AG04450 (cell line): ENCODE measurements at regions of chr1 and their contacts with region 1.

Region 1: DNA sequence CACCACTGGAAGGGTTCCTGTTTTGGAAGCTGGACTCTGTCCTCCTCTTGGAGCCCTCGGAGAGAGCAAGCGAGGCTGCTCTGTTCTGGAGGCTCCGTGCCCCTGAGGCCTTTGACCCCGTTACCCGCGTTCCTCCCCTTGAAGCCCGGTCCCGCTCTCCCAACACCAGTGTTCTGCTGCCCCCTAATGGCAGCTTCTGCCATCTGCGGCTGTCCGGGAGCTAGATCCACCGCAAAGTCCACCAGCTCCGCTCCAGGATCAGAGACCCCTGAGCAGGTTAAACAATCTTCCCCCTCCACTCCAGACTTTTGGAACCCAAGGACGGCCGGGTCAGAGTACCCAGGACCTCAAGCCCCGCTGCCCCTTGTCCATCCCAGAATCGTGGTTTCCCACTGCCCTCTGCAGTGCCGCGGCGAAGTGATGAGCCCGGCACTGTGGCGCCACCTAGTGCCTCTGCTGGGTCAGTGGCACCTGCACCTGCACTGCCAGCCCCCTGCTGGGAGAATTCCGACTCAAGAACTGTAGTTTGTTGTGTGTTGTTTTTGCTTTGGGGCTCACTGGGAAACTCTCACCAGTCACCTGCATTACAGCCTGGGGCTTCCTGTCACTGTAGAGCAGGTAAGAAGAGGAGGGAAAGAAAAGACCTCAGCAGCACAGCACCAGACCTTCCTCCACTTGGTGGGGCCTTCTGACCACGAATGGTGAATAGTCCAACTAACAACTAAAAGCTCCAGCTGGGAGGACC is 63.5 kb upstream of the NFASC start:
- DNase-seq: peak; percentile 33
- H3K4me3 ChIP-seq: peak overlapping the region; percentile 62
- H3K27ac ChIP-seq: no peak overlapping the region
- H3K27me3 ChIP-seq: peaks cover 3% of the 10 kb centered on the region
- CTCF ChIP-seq: peak; percentile 98

Region 2: DNA sequence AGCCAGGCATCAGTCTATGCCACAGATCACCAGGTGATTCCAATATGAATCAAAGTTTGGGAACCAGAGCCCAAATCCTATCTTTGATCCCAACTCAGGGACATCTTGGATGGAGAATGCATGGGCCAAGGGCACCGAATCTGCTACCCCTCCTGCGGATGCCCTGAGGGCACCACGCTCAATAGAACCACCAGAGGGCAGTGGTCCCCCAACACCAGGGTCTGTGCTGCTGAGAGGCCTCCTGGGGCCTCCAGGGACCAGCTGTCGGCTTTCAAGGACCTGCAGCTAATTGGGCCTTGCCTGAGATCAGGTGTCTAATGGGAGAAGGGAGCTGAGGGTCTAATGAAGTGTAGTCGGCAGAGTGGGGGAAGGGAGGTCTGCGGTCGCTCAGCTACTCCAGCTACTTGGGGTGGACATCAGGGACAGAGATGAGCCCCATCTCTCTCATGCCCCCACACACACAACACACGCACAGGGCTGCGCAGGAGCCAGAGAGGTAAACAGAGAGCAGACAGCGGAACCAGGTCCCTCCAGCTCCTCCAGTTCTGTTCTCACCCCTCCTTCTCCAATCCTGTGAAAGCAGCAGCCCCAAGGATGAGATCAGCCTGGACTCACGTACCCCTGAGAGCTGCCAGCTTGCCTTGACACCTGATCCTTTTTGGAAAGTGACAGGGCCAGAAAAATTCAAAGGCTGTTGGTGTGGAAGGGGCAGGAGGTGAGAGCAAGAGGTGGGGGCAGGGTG is 360.6 kb before region 1 on chr1:
- CTCF ChIA-PET with region 1: interaction called, 12 read pairs
- POLR2A ChIA-PET with region 1: no interaction called
- DNase-seq: no peak
- H3K4me3 ChIP-seq: no peak overlapping the region
- H3K27ac ChIP-seq: no peak overlapping the region
- H3K27me3 ChIP-seq: no peaks in the 10 kb centered on the region
- CTCF ChIP-seq: peak; percentile 81

Region 3: GRCh38 chr1:204530932-204531331 is 276.2 kb before region 1 on chr1:
- CTCF ChIA-PET with region 1: interaction called, 11 read pairs
- POLR2A ChIA-PET with region 1: no interaction called
- DNase-seq: no peak
- H3K4me3 ChIP-seq: no peak overlapping the region
- H3K27ac ChIP-seq: no peak overlapping the region
- H3K27me3 ChIP-seq: no peaks in the 10 kb centered on the region
- CTCF ChIP-seq: no peak

Region 4: GRCh38 chr1:204565617-204566582 is 241.2 kb before region 1 on chr1:
- CTCF ChIA-PET with region 1: interaction called, 364 read pairs
- POLR2A ChIA-PET with region 1: no interaction called
- DNase-seq: peak; percentile 53
- H3K4me3 ChIP-seq: no peak overlapping the region
- H3K27ac ChIP-seq: no peak overlapping the region
- H3K27me3 ChIP-seq: no peaks in the 10 kb centered on the region
- CTCF ChIP-seq: peak; percentile 71

Region 5: DNA sequence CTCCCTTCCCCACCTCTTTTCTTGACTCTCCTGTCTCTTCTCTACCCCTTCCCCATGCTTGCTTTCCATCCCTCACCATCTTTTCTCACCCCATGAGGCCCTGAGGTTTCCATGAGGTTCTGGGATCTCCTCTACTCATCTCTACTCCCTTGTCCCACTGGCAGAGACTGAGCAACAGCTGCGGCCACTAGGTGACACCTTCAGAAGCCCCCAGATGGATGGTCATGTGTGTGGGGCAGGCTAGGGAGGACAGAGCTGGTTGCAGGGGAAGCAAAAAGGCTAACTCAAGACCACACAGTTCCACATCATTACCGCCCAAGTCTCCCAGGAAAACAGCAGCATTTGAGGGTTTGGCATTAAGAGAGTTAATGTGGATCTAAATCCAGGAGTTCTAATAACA is 166.5 kb before region 1 on chr1:
- CTCF ChIA-PET with region 1: interaction called, 12 read pairs
- POLR2A ChIA-PET with region 1: no interaction called
- DNase-seq: no peak
- H3K4me3 ChIP-seq: no peak overlapping the region
- H3K27ac ChIP-seq: no peak overlapping the region
- H3K27me3 ChIP-seq: peaks cover 20% of the 10 kb centered on the region
- CTCF ChIP-seq: no peak

Region 6: GRCh38 chr1:204782118-204782700 is 24.9 kb before region 1 on chr1:
- CTCF ChIA-PET with region 1: interaction called, 10 read pairs
- POLR2A ChIA-PET with region 1: no interaction called
- DNase-seq: no peak
- H3K4me3 ChIP-seq: no peak overlapping the region
- H3K27ac ChIP-seq: no peak overlapping the region
- H3K27me3 ChIP-seq: no peaks in the 10 kb centered on the region
- CTCF ChIP-seq: no peak

Region 7: DNA sequence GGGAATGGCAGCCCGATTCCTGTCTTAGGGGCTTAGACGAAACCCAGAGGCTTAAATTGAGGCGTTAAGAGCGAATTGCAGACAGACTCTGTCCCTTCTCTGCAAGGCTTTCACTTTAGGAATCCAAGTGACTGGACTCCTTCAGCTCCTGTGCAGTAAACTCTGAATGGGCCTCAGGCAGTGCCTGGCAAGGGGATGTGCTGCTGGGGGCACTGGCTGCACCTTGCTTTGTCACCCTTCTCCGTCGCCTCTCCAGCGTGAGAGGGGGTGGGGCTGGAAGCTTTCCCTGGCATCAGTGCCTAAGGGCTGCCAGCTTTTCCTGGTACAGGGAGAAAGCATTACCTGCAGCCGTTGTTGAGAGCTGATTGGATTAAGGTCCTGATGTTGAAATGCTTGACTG is 23.6 kb after region 1 on chr1:
- CTCF ChIA-PET with region 1: interaction called, 31 read pairs
- POLR2A ChIA-PET with region 1: no interaction called
- DNase-seq: no peak
- H3K4me3 ChIP-seq: no peak overlapping the region
- H3K27ac ChIP-seq: no peak overlapping the region
- H3K27me3 ChIP-seq: peaks cover 14% of the 10 kb centered on the region
- CTCF ChIP-seq: no peak

Region 8: GRCh38 chr1:204975570-204976235 is 168.6 kb after region 1 on chr1:
- CTCF ChIA-PET with region 1: no interaction called
- POLR2A ChIA-PET with region 1: no interaction called
- DNase-seq: no peak
- H3K4me3 ChIP-seq: no peak overlapping the region
- H3K27ac ChIP-seq: no peak overlapping the region
- H3K27me3 ChIP-seq: peaks cover 7% of the 10 kb centered on the region
- CTCF ChIP-seq: peak; percentile 90